Natural killer cell (primary cell): ENCODE measurements at regions of chr1 and their contacts with region 1.

Region 1: GRCh38 chr1:183956559-183957188 is 80.9 kb downstream of the COLGALT2 start:
- DNase-seq: peak; percentile 43 to 87
- ATAC-seq: peak; percentile 83 to 96 (median 92)
- H3K4me3 ChIP-seq: no peak overlapping the region
- H3K4me3 Mint-ChIP-seq: peak overlapping the region; percentile 77
- H3K27ac ChIP-seq: peak overlapping the region; percentile 86
- H3K27ac Mint-ChIP-seq: no peak overlapping the region
- H3K4me1 ChIP-seq: peaks cover 32% of the 10 kb centered on the region
- H3K4me1 Mint-ChIP-seq: peaks cover 16 to 19% of the 10 kb centered on the region in 2 donors
- H3K27me3 ChIP-seq: no peaks in the 10 kb centered on the region
- H3K27me3 Mint-ChIP-seq: no peaks in the 10 kb centered on the region
- CTCF ChIP-seq: no peak

Region 2: DNA sequence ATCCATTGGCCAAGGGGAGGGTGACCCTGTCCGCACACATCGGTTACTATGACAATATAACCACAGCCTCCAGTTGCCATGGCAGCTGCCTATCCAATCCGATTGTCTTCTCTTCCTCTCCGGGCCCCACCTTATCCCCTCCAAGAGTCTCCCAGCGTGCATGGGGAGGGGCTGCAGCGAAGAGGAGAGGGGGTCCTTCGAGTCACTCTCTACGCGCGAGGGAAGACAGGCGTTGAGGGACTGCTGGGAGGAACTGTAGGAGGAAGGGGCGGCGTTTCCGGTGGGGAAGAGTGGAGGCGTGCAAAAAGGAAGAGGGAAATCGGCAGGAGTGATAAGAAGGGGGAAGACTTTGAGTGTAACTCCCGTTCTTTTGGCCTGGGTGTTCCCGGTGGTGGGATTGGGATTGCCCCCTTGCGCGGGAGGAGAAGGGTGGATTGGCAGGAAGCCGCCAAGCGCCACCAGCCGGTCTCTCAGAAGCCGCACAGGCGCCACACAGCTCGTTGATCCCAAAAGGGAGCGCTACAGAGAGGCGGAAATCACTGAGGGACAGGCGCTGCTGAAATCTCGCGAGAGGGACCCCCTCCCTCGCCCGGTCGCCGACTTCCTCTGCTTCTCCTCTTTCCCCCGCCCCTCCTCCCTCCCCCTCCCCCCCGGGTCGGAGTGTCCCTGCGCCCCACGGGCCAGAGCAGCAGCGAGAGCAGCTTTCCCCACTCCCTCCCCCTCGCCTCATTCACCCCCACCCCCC is 484.8 kb before region 1 on chr1:
- intact Hi-C with region 1: loop called (anchors 2 kb)
- DNase-seq: peak; percentile 90 to 98
- ATAC-seq: peak; percentile 68 to 88 (median 74)
- H3K4me3 ChIP-seq: peak overlapping the region; percentile 80
- H3K4me3 Mint-ChIP-seq: peak overlapping the region; percentile 98
- H3K27ac ChIP-seq: peak overlapping the region; percentile 97
- H3K27ac Mint-ChIP-seq: peak overlapping the region; percentile 98 to 99
- H3K4me1 ChIP-seq: peaks cover 16% of the 10 kb centered on the region
- H3K4me1 Mint-ChIP-seq: peaks cover 23 to 35% of the 10 kb centered on the region in 2 donors
- H3K27me3 ChIP-seq: no peaks in the 10 kb centered on the region
- H3K27me3 Mint-ChIP-seq: peaks cover 0 to 7% of the 10 kb centered on the region in 2 donors
- CTCF ChIP-seq: no peak

Region 3: DNA sequence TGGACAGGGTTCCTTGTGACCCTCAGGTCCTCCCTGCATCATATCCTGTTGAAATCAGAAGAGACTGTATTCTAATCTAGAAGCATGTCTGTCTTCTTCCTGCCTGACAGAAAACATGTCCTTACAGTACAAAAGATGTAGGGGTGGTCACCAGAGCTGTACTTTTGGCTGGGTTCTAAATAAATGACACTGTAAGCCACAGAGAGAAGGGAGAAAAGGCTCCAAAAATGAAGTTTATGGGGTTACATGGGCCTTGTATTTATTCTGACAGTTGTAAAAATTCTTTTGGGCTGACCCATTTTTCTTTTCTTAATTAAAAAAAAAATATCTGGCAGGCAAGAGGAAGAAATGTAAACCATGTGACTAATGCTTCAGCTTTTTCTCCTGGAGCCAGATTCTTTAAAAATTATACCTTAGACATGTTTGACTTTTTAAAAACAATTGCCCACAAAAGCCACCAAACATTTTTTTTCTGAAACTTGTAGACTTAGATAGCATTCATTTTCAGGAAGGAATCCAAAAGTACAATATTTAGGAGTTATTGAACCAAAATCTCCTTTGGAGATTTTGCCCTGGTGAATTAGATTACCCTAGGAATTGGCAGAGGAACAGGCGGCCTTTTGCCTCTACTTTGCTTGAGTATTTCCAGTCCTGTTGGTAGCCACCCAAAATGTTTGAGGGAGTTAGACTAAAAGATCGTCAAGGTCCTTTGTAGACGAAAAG is 134.6 kb before region 1 on chr1:
- intact Hi-C with region 1: no loop called
- DNase-seq: no peak
- ATAC-seq: no peak
- H3K4me3 ChIP-seq: no peak overlapping the region
- H3K4me3 Mint-ChIP-seq: no peak overlapping the region
- H3K27ac ChIP-seq: no peak overlapping the region
- H3K27ac Mint-ChIP-seq: no peak overlapping the region
- H3K4me1 ChIP-seq: no peaks in the 10 kb centered on the region
- H3K4me1 Mint-ChIP-seq: no peaks in the 10 kb centered on the region
- H3K27me3 ChIP-seq: no peaks in the 10 kb centered on the region
- H3K27me3 Mint-ChIP-seq: peaks cover 0 to 3% of the 10 kb centered on the region in 2 donors
- CTCF ChIP-seq: no peak

Region 4: GRCh38 chr1:183901748-183902330 is 54.8 kb before region 1 on chr1:
- intact Hi-C with region 1: no loop called
- DNase-seq: no peak
- ATAC-seq: no peak
- H3K4me3 ChIP-seq: no peak overlapping the region
- H3K4me3 Mint-ChIP-seq: no peak overlapping the region
- H3K27ac ChIP-seq: no peak overlapping the region
- H3K27ac Mint-ChIP-seq: no peak overlapping the region
- H3K4me1 ChIP-seq: no peaks in the 10 kb centered on the region
- H3K4me1 Mint-ChIP-seq: peaks cover 2 to 3% of the 10 kb centered on the region in 2 donors
- H3K27me3 ChIP-seq: no peaks in the 10 kb centered on the region
- H3K27me3 Mint-ChIP-seq: peaks cover 0 to 9% of the 10 kb centered on the region in 2 donors
- CTCF ChIP-seq: no peak

Region 5: GRCh38 chr1:184036517-184036949 is 79.9 kb after region 1 on chr1:
- intact Hi-C with region 1: loop called (anchors 5 kb)
- DNase-seq: peak; percentile 20 to 39
- ATAC-seq: peak; percentile 15 to 41 (median 27)
- H3K4me3 ChIP-seq: peak overlapping the region; percentile 69
- H3K4me3 Mint-ChIP-seq: peak overlapping the region; percentile 86
- H3K27ac ChIP-seq: no peak overlapping the region
- H3K27ac Mint-ChIP-seq: peak overlapping the region in 1 of 2 donors; percentile 39
- H3K4me1 ChIP-seq: peaks cover 18% of the 10 kb centered on the region
- H3K4me1 Mint-ChIP-seq: peaks cover 22 to 37% of the 10 kb centered on the region in 2 donors
- H3K27me3 ChIP-seq: peaks cover 8% of the 10 kb centered on the region
- H3K27me3 Mint-ChIP-seq: peaks cover 22 to 40% of the 10 kb centered on the region in 2 donors
- CTCF ChIP-seq: no peak

Region 6: GRCh38 chr1:184222652-184223052 is 266.0 kb after region 1 on chr1:
- intact Hi-C with region 1: loop called (anchors 5 kb)
- DNase-seq: peak; percentile 39 to 63
- ATAC-seq: peak; percentile 60 to 76 (median 75)
- H3K4me3 ChIP-seq: no peak overlapping the region
- H3K4me3 Mint-ChIP-seq: peak overlapping the region; percentile 1
- H3K27ac ChIP-seq: no peak overlapping the region
- H3K27ac Mint-ChIP-seq: no peak overlapping the region
- H3K4me1 ChIP-seq: no peaks in the 10 kb centered on the region
- H3K4me1 Mint-ChIP-seq: peaks cover 0 to 5% of the 10 kb centered on the region in 2 donors
- H3K27me3 ChIP-seq: no peaks in the 10 kb centered on the region
- H3K27me3 Mint-ChIP-seq: peaks cover 10 to 18% of the 10 kb centered on the region in 2 donors
- CTCF ChIP-seq: peak; percentile 92

Region 7: GRCh38 chr1:184494929-184495328 is 538.3 kb after region 1 on chr1:
- intact Hi-C with region 1: loop called (anchors 1 kb)
- DNase-seq: no peak
- ATAC-seq: no peak
- H3K4me3 ChIP-seq: no peak overlapping the region
- H3K4me3 Mint-ChIP-seq: no peak overlapping the region
- H3K27ac ChIP-seq: no peak overlapping the region
- H3K27ac Mint-ChIP-seq: peak overlapping the region; percentile 98 to 99
- H3K4me1 ChIP-seq: peaks cover 17% of the 10 kb centered on the region
- H3K4me1 Mint-ChIP-seq: peaks cover 59 to 60% of the 10 kb centered on the region in 2 donors
- H3K27me3 ChIP-seq: no peaks in the 10 kb centered on the region
- H3K27me3 Mint-ChIP-seq: no peaks in the 10 kb centered on the region
- CTCF ChIP-seq: no peak